ENCODE measurements at regions of chr15 and their contacts with region 1.

Region 1: DNA sequence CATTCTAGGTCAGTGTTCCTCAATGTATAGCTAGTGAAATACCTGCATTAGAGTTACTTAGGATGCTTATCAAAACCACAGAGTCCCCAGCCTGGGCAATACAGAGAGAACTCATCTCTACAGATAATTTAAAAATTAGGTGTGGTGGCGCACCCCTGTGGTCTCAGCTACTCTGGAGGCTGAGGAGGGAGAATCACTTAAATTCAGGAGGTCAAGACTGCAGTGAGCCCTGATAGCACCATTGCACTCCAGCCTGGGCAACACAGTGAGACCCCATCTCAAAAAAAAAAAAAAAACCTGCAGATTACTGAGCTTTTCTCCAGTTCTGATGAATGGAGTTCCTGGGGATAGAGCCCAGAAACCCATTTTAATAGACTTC is 10.1 kb upstream of the MINDY2 start:
- DNase-seq: peak; percentile 33
- ATAC-seq: no peak
- H3K4me3 Mint-ChIP-seq: no peak overlapping the region
- H3K27ac Mint-ChIP-seq: no peak overlapping the region
- H3K4me1 Mint-ChIP-seq: peaks cover 6% of the 10 kb centered on the region
- H3K27me3 Mint-ChIP-seq: peaks cover 2% of the 10 kb centered on the region

Region 2: GRCh38 chr15:58749532-58750337 is 11.3 kb before region 1 on chr15 and contains the start of gene ADAM10:
- CTCF ChIA-PET with region 1: interaction called, 10 read pairs
- POLR2A ChIA-PET with region 1: interaction called, 5 read pairs
- DNase-seq: peak; percentile 99
- ATAC-seq: peak; percentile 92
- H3K4me3 Mint-ChIP-seq: peak within 1 kb of the TSS; percentile 100
- H3K27ac Mint-ChIP-seq: peak within 1 kb of the TSS; percentile 96
- H3K4me1 Mint-ChIP-seq: peaks cover 34% of the 10 kb centered on the region
- H3K27me3 Mint-ChIP-seq: no peaks in the 10 kb centered on the region
- total RNA-seq, gene ADAM10: 133 to 135 TPM

Region 3: GRCh38 chr15:59313641-59314332 is 552.8 kb after region 1 on chr15:
- CTCF ChIA-PET with region 1: no interaction called
- POLR2A ChIA-PET with region 1: no interaction called
- DNase-seq: no peak
- ATAC-seq: no peak
- H3K4me3 Mint-ChIP-seq: no peak overlapping the region
- H3K27ac Mint-ChIP-seq: no peak overlapping the region
- H3K4me1 Mint-ChIP-seq: peaks cover 30% of the 10 kb centered on the region
- H3K27me3 Mint-ChIP-seq: peaks cover 9% of the 10 kb centered on the region